ENCODE measurements at regions of chr19 and their contacts with region 1.

Region 1: GRCh38 chr19:1113033-1113985 is 9.5 kb downstream of the GPX4 start:
- DNase-seq: peak; percentile 89 to 99 (median 96)

Region 2: DNA sequence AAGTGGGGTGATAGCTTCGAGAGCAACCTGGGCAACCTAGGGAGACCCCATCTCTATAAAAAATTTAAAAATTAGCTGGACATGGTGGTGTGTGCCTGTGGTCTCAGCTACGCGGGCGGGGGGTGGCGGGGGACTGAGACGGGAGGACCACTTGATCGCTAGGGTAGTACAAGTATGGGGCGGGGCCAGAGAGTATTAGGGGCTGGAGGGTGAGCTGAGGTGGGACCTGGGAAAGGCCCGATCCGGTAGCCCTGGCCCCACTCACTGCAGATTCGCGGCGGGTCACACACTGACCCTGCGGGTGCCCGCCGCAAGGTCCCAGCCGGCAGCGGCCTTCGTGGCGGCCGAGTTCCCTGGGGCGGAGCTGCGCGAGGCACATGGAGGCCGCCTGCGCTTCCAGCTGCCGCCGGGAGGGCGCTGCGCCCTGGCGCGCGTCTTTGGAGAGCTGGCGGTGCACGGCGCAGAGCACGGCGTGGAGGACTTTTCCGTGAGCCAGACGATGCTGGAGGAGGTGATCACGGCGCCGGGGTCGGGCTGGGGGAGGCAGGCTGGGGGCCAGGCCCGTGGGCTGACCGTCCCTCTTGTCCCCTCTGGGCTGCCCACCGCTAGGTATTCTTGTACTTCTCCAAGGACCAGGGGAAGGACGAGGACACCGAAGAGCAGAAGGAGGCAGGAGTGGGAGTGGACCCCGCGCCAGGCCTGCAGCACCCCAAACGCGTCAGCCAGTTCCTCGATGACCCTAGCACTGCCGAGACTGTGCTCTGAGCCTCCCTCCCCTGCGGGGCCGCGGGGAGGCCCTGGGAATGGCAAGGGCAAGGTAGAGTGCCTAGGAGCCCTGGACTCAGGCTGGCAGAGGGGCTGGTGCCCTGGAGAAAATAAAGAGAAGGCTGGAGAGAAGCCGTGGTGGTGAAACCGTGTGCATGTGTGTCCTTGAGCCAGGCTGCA is 48.4 kb before region 1 on chr19:
- intact Hi-C with region 1: no loop called
- DNase-seq: no peak

Region 3: GRCh38 chr19:1094975-1095701 is 18.2 kb before region 1 on chr19 and contains the start of gene POLR2E:
- intact Hi-C with region 1: no loop called
- DNase-seq: peak; percentile 98 to 100 (median 99)

Region 4: GRCh38 chr19:1189419-1189818 is 76.1 kb after region 1 on chr19:
- intact Hi-C with region 1: loop called (anchors 5 kb)
- DNase-seq: no peak

Region 5: GRCh38 chr19:1521636-1522035 is 408.3 kb after region 1 on chr19:
- intact Hi-C with region 1: no loop called
- DNase-seq: peak; percentile 23 to 91 (median 60)

Region 6: DNA sequence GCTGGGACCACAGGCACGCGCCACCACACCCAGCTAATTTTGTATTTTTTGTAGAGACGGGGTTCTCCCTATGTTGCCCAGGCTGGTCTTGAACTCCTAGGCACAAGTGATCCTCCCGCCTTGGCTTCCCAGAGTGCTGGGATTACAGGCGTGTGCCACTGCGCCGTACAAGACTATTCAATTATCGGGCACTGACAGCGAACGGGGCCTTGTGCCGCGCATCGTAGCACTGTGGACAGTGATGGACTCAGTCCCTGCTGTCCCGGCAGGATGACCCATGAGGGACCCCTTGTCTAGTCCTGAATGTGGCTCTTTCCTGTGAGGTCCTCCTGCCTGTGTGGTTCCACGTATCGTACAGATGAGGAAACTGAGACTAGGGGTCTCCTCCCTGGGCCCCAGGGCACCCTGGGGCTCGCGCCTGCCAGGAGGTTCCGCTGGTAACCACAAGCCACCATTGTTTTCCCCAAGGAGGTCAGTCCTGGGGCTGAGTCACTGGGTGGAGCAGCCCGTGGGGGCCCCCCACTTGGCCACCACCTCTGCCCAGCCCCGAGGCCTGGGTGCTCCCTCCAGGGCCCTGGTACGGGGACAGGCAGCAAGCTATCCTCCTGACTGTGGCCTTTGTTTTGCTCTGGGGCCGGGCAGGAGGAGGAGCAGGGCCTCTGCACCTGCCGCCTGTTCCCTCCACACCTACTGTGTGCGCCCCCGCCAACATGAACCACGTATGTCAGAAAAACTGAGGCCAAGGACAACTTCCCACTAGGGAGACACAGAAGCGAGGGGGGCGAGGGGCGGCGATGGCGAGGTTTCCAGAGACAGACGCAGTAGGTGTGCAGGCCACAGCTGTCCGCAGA is 542.0 kb after region 1 on chr19:
- intact Hi-C with region 1: no loop called
- DNase-seq: no peak